ENCODE measurements at regions of chr20 and their contacts with region 1.

Region 1: GRCh38 chr20:5919626-5920544 is 30.4 kb downstream of the TRMT6 start:
- DNase-seq: no peak
- H3K4me3 ChIP-seq: no peak overlapping the region
- CTCF ChIP-seq: no peak
- POLR2A ChIP-seq: no peak

Region 2: DNA sequence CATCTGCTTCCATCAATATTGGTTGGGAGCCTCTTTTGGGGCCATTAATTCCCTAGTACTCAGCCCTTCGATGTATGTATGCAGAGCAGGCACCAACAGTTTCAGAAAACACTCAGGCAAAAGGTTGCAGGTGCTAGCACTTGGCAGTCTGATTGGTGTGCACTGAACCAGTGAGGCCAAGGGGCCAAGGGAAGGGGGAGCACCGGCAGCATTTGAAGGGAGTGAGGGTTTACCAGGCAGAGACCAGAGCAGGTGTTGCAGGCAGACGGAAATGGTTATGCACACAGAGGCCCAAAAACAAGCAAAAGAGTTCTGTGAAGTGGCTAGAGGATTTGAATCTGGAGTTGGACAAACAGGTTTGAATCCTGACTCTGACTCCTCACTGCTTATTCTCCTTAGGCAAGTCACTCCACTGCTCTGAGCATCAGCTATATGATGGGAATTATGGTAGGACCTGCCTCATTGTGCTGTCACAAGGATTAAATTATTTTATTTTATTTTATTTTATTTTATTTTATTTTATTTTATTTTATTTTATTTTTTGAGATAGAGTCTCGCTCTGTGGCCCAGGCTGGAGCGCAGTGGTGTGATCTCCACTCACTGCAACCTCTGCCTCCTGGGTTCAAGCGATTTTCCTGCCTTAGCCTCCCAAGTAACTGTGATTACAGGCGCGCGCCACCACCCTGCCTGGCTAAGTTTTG is 227.8 kb before region 1 on chr20:
- intact Hi-C with region 1: no loop called
- DNase-seq: no peak
- H3K4me3 ChIP-seq: no peak overlapping the region
- CTCF ChIP-seq: no peak
- POLR2A ChIP-seq: no peak

Region 3: GRCh38 chr20:5735845-5736525 is 183.9 kb before region 1 on chr20:
- intact Hi-C with region 1: no loop called
- DNase-seq: no peak
- H3K4me3 ChIP-seq: no peak overlapping the region
- CTCF ChIP-seq: no peak
- POLR2A ChIP-seq: no peak

Region 4: DNA sequence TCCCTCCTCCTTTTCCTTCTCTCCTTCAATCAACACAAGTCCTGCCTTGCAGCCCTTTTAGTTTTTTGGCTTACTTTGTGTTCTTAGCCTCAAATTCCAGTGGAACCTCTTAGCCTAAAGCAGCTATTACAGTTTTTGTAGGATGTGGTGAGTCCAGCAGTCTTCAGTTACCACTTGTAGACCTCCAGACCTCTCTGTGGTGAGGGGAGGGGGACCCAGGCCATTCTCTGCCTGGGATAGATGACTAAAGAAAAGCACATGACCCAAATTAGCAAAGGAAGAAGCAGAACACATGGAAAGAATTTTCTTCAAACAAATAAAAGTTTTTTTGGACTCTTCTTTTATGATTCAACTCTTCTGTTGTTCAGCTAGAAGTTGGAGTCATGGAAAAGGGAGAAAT is 1773.9 kb after region 1 on chr20:
- intact Hi-C with region 1: loop called (anchors 5 kb)
- DNase-seq: no peak
- H3K4me3 ChIP-seq: no peak overlapping the region
- CTCF ChIP-seq: no peak
- POLR2A ChIP-seq: no peak

Measured in lower leg skin (tissue), 4 donors.